ENCODE measurements at regions of chr19 and their contacts with region 1.

Region 1: DNA sequence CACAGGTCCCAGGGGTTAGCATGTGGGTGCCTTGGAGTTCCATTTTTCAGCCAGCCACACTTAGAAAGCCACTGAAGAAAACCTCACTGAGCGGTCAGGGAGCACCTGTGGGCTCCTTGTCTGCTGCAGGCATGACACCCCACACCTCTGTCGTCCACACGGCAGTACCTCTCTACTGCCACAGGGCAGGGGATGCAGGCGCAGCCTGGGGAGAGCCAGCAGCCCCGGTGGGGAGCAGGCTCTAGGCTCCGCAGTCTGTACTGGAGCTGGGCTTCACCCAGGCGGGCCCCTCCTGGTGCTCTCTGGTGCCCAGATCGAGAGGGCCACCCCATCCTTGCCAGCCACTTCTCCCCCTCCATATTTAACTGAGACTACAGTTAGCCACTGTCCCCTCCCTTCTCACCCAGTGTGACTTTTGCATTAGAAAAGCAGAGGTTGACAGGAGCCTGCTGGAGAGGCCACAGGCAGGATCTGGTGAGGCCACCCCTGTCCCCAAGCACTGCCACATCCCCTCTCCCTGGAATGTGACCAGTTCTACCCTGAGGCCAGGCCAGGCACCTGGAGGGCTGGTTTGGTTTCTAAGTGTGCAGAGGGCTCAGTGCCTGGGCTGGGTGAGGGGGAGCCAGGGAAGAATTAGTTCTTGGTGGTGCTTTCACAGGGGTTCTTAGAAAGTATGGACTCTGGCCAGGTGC is 104.4 kb downstream of the KDM4B start:
- DNase-seq: no peak
- H3K4me3 ChIP-seq: no peak overlapping the region
- H3K27ac ChIP-seq: no peak overlapping the region
- H3K4me1 ChIP-seq: no peaks in the 10 kb centered on the region
- H3K27me3 ChIP-seq: no peaks in the 10 kb centered on the region
- CTCF ChIP-seq: no peak
- POLR2A ChIP-seq: no peak

Region 2: GRCh38 chr19:4471403-4472173 is 601.7 kb before region 1 on chr19:
- intact Hi-C with region 1: no loop called
- DNase-seq: peak; percentile 98 to 100
- H3K4me3 ChIP-seq: peak overlapping the region; percentile 95 to 99 (median 97)
- H3K27ac ChIP-seq: peak overlapping the region; percentile 83 to 91
- H3K4me1 ChIP-seq: peaks cover 8 to 13% of the 10 kb centered on the region in 2 donors
- H3K27me3 ChIP-seq: no peaks in the 10 kb centered on the region
- CTCF ChIP-seq: no peak
- POLR2A ChIP-seq: peak; percentile 53

Region 3: GRCh38 chr19:4678881-4679815 is 394.2 kb before region 1 on chr19:
- intact Hi-C with region 1: no loop called
- DNase-seq: no peak
- H3K4me3 ChIP-seq: no peak overlapping the region
- H3K27ac ChIP-seq: no peak overlapping the region
- H3K4me1 ChIP-seq: no peaks in the 10 kb centered on the region
- H3K27me3 ChIP-seq: no peaks in the 10 kb centered on the region
- CTCF ChIP-seq: no peak
- POLR2A ChIP-seq: no peak

Region 4: DNA sequence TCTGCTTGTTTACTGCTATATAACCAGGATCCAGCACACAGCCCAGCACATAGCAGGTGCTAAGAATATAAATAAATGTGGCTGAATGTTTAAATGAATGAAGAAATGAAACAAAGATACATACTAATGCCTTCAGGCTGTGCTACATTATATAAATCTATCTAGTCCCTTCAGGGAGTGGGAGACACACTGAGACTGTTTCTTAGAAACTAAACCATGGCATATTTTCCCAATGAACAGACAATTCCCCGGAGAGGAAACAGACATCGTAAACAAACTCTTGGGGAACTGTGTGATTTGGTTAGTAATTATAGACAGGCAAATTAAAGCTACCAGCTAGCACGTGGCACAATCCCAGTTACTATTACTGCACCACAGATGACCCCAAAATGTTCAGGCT is 291.5 kb before region 1 on chr19:
- intact Hi-C with region 1: no loop called
- DNase-seq: no peak
- H3K4me3 ChIP-seq: no peak overlapping the region
- H3K27ac ChIP-seq: no peak overlapping the region
- H3K4me1 ChIP-seq: no peaks in the 10 kb centered on the region
- H3K27me3 ChIP-seq: peaks cover 0 to 2% of the 10 kb centered on the region in 2 donors
- CTCF ChIP-seq: no peak
- POLR2A ChIP-seq: no peak

Region 5: DNA sequence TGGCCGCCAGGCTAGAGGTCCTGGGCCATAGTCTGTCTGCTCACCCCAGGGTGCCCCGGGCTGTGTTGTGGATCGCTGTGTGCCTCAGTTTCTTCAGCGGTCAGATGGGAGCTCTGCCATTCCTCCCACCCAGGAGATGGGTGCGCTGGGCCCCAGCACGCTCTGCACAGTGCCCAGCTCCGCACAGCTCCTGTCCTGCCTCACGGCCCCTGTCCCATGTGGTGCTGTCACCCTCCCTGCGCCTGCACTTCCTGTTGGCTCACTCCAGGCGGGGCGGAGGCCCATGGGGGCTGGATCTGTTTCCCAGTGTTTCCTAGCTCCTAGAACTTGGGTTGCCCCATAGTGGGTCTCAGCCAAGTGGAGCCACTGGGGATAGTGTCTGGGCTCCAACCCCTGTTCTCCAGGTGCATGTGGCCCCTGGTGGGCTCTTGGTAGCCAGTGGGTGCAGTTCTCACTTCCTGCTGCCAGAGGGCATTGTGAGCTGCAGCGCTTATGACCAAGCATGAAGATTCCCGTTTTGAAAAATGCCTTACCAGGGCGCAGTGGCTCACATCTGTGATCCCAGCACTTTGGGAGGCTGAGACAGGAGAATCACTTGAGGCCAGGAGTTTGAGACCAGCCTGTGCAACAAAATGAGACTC is 34.5 kb before region 1 on chr19:
- intact Hi-C with region 1: loop called (anchors 1 kb)
- DNase-seq: no peak
- H3K4me3 ChIP-seq: no peak overlapping the region
- H3K27ac ChIP-seq: no peak overlapping the region
- H3K4me1 ChIP-seq: peaks cover 6 to 16% of the 10 kb centered on the region in 2 donors
- H3K27me3 ChIP-seq: no peaks in the 10 kb centered on the region
- CTCF ChIP-seq: peak in 1 of 3 donors; percentile 33
- POLR2A ChIP-seq: no peak

Region 6: GRCh38 chr19:5091018-5091683 is 17.9 kb after region 1 on chr19:
- intact Hi-C with region 1: loop called (anchors 1 kb)
- DNase-seq: no peak
- H3K4me3 ChIP-seq: peak overlapping the region in 2 of 3 donors; percentile 7 to 21
- H3K27ac ChIP-seq: peak overlapping the region; percentile 62 to 82
- H3K4me1 ChIP-seq: peaks cover 0 to 6% of the 10 kb centered on the region in 2 donors
- H3K27me3 ChIP-seq: no peaks in the 10 kb centered on the region
- CTCF ChIP-seq: no peak
- POLR2A ChIP-seq: no peak

Region 7: DNA sequence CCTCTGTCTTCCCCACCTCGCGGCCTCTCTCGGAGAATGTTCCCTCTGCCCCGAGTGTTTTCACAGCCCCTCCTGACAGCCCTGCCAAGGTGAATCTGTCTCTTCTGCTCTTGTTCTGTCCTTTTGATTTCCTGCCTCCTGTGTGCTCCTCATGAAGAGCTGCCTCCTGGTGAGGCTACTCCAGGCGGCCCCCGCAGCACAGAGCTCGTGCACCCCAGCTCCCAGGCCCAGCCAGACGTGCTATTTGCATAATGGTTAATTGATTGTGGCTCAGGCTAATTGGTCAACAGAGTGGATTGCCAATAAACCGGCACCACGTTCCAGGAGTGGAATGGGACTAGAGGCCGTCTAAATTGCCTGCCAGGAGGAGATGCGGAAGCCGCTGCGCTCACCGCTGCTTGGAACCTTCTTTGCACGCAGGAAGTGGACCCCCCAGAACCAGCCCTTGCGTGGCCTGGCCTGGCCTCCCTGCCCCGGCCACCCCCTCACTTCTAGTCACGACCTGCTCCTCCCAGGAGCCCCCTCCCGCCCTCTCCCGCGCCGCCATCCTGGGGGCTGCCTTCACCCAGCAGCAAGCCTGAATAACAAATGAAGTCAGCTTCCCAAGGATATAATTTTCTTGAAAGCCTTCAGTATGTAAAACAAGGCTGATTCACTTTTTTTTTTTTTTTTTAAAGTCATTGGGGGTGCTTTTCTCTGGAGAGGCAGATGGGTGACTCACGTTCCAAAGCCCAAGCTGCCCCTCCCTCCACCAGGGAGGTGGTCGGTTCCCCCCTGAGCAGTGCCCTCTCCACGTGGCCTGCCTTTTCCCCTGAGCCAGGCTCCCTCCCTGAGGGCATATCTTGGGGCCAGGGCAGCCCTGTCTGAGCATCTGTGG is 39.6 kb after region 1 on chr19:
- intact Hi-C with region 1: no loop called
- DNase-seq: no peak
- H3K4me3 ChIP-seq: no peak overlapping the region
- H3K27ac ChIP-seq: peak overlapping the region in 1 of 2 donors; percentile 83
- H3K4me1 ChIP-seq: no peaks in the 10 kb centered on the region
- H3K27me3 ChIP-seq: no peaks in the 10 kb centered on the region
- CTCF ChIP-seq: no peak
- POLR2A ChIP-seq: no peak